ENCODE measurements at regions of chr16 and their contacts with region 1.

Region 1: DNA sequence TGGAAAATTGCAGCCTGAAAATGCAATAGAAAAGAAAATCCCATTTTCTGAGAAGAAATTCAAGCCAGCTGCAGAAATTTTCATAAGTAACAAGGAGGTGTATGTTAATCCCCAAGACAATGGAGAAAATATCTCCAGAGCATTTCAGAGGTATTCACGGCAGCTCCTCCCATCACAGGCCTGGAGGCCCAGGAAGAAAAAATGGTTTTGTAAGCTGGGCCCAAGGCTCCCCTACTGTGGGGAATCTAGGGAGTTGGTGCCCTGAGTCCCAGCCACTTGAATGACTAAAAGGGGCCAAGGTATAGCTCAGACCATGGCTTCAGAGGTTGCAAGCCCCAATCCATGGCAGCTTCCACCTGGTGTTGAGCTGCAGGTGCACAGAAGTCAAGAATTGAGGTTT is 93.3 kb upstream of the ZNF267 start:
- DNase-seq: no peak
- ATAC-seq: no peak
- H3K4me3 ChIP-seq: no peak overlapping the region
- H3K27ac ChIP-seq: no peak overlapping the region
- H3K4me1 ChIP-seq: no peaks in the 10 kb centered on the region
- H3K27me3 ChIP-seq: no peaks in the 10 kb centered on the region
- CTCF ChIP-seq: no peak
- EP300 ChIP-seq: no peak
- POLR2A ChIP-seq: no peak
- RAD21 ChIP-seq: no peak

Region 2: DNA sequence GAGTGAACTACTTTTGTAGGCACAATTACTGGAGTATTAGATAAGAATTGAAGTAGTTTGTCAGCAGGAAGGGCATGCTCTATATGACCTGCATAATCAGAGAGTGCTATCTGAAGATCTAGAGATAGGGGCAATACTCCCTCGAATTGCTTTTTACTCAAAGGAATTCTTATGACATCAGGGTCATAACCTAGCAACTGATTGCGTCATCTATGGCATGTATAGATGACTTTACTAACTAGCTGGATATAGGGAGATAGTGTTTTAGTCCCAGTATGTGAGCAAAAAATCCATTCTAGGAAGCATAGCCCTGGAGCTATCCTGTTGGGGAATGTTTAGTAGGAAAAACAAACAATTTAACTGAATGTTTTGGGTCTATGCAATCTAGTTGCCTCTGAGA is 16.2 kb before region 1 on chr16:
- CTCF ChIA-PET with region 1: no interaction called
- POLR2A ChIA-PET with region 1: no interaction called
- RAD21 ChIA-PET with region 1: no interaction called
- SMC1A ChIA-PET with region 1: no interaction called
- in situ Hi-C with region 1: no loop called
- intact Hi-C with region 1: no loop called
- DNase-seq: no peak
- ATAC-seq: no peak
- H3K4me3 ChIP-seq: no peak overlapping the region
- H3K27ac ChIP-seq: no peak overlapping the region
- H3K4me1 ChIP-seq: no peaks in the 10 kb centered on the region
- H3K27me3 ChIP-seq: no peaks in the 10 kb centered on the region
- CTCF ChIP-seq: no peak
- EP300 ChIP-seq: no peak
- POLR2A ChIP-seq: no peak
- RAD21 ChIP-seq: no peak

Region 3: GRCh38 chr16:31842864-31843263 is 62.5 kb after region 1 on chr16:
- CTCF ChIA-PET with region 1: no interaction called
- POLR2A ChIA-PET with region 1: no interaction called
- RAD21 ChIA-PET with region 1: no interaction called
- SMC1A ChIA-PET with region 1: no interaction called
- in situ Hi-C with region 1: loop called (anchors 5 kb)
- intact Hi-C with region 1: no loop called
- DNase-seq: no peak
- ATAC-seq: no peak
- H3K4me3 ChIP-seq: no peak overlapping the region
- H3K27ac ChIP-seq: no peak overlapping the region
- H3K4me1 ChIP-seq: no peaks in the 10 kb centered on the region
- H3K27me3 ChIP-seq: no peaks in the 10 kb centered on the region
- CTCF ChIP-seq: no peak
- EP300 ChIP-seq: no peak
- POLR2A ChIP-seq: no peak
- RAD21 ChIP-seq: no peak